ENCODE measurements at regions of chr1 and their contacts with region 1.

Region 1: DNA sequence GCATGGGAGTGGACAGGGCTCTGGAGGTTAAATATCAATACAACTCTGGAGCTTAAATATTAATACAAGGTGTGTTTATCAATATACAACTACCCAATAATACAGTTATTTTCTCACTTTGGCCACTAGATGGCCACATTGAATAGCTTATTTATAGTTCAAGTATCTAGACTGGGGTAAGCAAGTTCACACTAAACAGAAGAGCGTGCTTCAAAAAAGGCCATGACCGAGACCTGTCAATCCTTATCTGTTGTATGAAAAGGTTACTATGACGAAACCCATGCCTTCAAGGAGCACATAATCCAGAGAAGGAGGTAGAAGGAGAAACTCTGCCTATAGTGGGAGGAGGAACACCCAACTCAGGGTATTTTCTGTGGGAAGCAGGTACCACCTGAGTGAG is 29.1 kb downstream of the CHML start:
- DNase-seq: no peak
- ATAC-seq: peak; percentile 96
- H3K4me3 Mint-ChIP-seq: no peak overlapping the region
- H3K27ac Mint-ChIP-seq: no peak overlapping the region
- H3K4me1 Mint-ChIP-seq: peaks cover 8% of the 10 kb centered on the region
- H3K27me3 Mint-ChIP-seq: no peaks in the 10 kb centered on the region
- CTCF ChIP-seq: no peak

Region 2: GRCh38 chr1:241265351-241265761 is 345.7 kb before region 1 on chr1:
- CTCF ChIA-PET with region 1: no interaction called
- POLR2A ChIA-PET with region 1: no interaction called
- intact Hi-C with region 1: no loop called
- DNase-seq: no peak
- ATAC-seq: no peak
- H3K4me3 Mint-ChIP-seq: no peak overlapping the region
- H3K27ac Mint-ChIP-seq: no peak overlapping the region
- H3K4me1 Mint-ChIP-seq: no peaks in the 10 kb centered on the region
- H3K27me3 Mint-ChIP-seq: no peaks in the 10 kb centered on the region
- CTCF ChIP-seq: no peak

Region 3: GRCh38 chr1:241627453-241628259 is 16.6 kb after region 1 on chr1:
- CTCF ChIA-PET with region 1: interaction called, 49 read pairs
- POLR2A ChIA-PET with region 1: interaction called, 11 read pairs
- intact Hi-C with region 1: loop called (anchors 1 kb)
- DNase-seq: no peak
- ATAC-seq: peak; percentile 83
- H3K4me3 Mint-ChIP-seq: peak overlapping the region; percentile 66
- H3K27ac Mint-ChIP-seq: peak overlapping the region; percentile 86
- H3K4me1 Mint-ChIP-seq: peaks cover 48% of the 10 kb centered on the region
- H3K27me3 Mint-ChIP-seq: no peaks in the 10 kb centered on the region
- CTCF ChIP-seq: peak; percentile 17

Region 4: GRCh38 chr1:241847796-241848685 is 237.0 kb after region 1 on chr1 and contains the start of gene EXO1:
- CTCF ChIA-PET with region 1: interaction called, 7 read pairs
- POLR2A ChIA-PET with region 1: no interaction called
- intact Hi-C with region 1: loop called (anchors 1 kb)
- DNase-seq: peak; percentile 91
- ATAC-seq: peak; percentile 98
- H3K4me3 Mint-ChIP-seq: peak within 1 kb of the TSS; percentile 100
- H3K27ac Mint-ChIP-seq: peak within 1 kb of the TSS; percentile 99
- H3K4me1 Mint-ChIP-seq: peaks cover 15% of the 10 kb centered on the region
- H3K27me3 Mint-ChIP-seq: no peaks in the 10 kb centered on the region
- CTCF ChIP-seq: no peak
- total RNA-seq, gene EXO1: 2.3 TPM in 2 replicates

Region 5: GRCh38 chr1:241985787-241986186 is 374.7 kb after region 1 on chr1:
- CTCF ChIA-PET with region 1: interaction called, 14 read pairs
- POLR2A ChIA-PET with region 1: no interaction called
- intact Hi-C with region 1: no loop called
- DNase-seq: no peak
- ATAC-seq: no peak
- H3K4me3 Mint-ChIP-seq: no peak overlapping the region
- H3K27ac Mint-ChIP-seq: no peak overlapping the region
- H3K4me1 Mint-ChIP-seq: no peaks in the 10 kb centered on the region
- H3K27me3 Mint-ChIP-seq: no peaks in the 10 kb centered on the region
- CTCF ChIP-seq: no peak

Region 6: GRCh38 chr1:242017584-242018233 is 406.6 kb after region 1 on chr1:
- CTCF ChIA-PET with region 1: no interaction called
- POLR2A ChIA-PET with region 1: no interaction called
- intact Hi-C with region 1: loop called (anchors 1 kb)
- DNase-seq: no peak
- ATAC-seq: peak; percentile 77
- H3K4me3 Mint-ChIP-seq: no peak overlapping the region
- H3K27ac Mint-ChIP-seq: no peak overlapping the region
- H3K4me1 Mint-ChIP-seq: no peaks in the 10 kb centered on the region
- H3K27me3 Mint-ChIP-seq: no peaks in the 10 kb centered on the region
- CTCF ChIP-seq: no peak

Measured in activated B cell treated with CpG ODN at 0.5 μM for 24 hours (primary cell).